CD8-positive, alpha-beta T cell (primary cell): ENCODE measurements at regions of chr15 and their contacts with region 1.

Region 1: DNA sequence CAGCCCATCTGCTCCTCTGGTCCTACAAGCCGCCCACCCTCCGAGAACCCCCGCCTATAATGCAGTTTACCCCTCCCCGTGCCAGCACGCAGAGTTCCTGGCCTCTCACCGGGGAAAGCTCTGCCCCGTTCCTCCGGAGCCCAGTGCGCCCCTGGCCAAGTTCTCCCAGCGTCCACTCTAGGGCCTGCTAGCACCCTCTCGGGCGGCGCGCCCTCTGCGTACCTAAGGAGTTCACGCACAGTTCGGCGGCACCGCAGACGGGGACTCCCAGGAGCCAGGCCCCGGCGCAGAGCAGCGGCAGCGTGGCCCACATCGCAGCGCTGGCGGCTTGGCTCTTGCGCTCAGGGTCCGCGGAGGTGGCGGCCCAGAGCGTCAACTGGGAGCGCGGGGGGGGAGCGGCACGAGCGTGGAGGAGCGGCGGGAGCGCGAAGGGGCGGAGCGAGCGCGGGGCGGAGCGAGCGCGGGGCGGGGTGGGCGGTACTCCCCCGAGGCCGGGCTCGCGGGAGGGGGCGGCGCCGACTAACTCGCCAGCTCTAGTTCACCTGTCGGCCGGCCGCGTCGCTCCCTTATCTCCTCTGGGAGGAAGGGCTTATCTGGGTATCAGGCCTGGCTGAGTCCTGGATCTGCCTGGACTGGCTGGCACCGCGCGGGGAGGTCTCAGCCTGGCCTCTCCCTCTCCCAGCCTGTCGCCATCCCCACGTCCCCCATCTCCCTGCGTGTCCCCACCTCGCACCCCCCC is at the start of gene CTSH:
- DNase-seq: peak; percentile 34 to 84 (median 72)
- ATAC-seq: peak; percentile 96
- H3K4me3 ChIP-seq: peak within 1 kb of the TSS; percentile 54 to 57
- H3K4me3 Mint-ChIP-seq: peak within 1 kb of the TSS; percentile 79
- H3K27ac ChIP-seq: no peak within 1 kb of the TSS
- H3K27ac Mint-ChIP-seq: peak within 1 kb of the TSS; percentile 64
- H3K4me1 ChIP-seq: peaks cover 6% of the 10 kb centered on the region
- H3K4me1 Mint-ChIP-seq: peaks cover 4% of the 10 kb centered on the region
- H3K27me3 ChIP-seq: peaks cover 0 to 2% of the 10 kb centered on the region in 2 experiments
- H3K27me3 Mint-ChIP-seq: peaks cover 3% of the 10 kb centered on the region
- CTCF ChIP-seq: no peak
- total RNA-seq, gene CTSH: 3.7 to 5.0 TPM

Region 2: GRCh38 chr15:78671626-78672211 is 273.1 kb before region 1 on chr15:
- CTCF ChIA-PET with region 1: no interaction called
- POLR2A ChIA-PET with region 1: no interaction called
- intact Hi-C with region 1: no loop called
- DNase-seq: no peak
- ATAC-seq: no peak
- H3K4me3 ChIP-seq: no peak overlapping the region
- H3K4me3 Mint-ChIP-seq: no peak overlapping the region
- H3K27ac ChIP-seq: no peak overlapping the region
- H3K27ac Mint-ChIP-seq: no peak overlapping the region
- H3K4me1 ChIP-seq: no peaks in the 10 kb centered on the region
- H3K4me1 Mint-ChIP-seq: no peaks in the 10 kb centered on the region
- H3K27me3 ChIP-seq: no peaks in the 10 kb centered on the region
- H3K27me3 Mint-ChIP-seq: no peaks in the 10 kb centered on the region
- CTCF ChIP-seq: no peak

Region 3: GRCh38 chr15:79243723-79244122 is 298.9 kb after region 1 on chr15:
- CTCF ChIA-PET with region 1: no interaction called
- POLR2A ChIA-PET with region 1: no interaction called
- intact Hi-C with region 1: no loop called
- DNase-seq: no peak
- ATAC-seq: no peak
- H3K4me3 ChIP-seq: no peak overlapping the region
- H3K4me3 Mint-ChIP-seq: no peak overlapping the region
- H3K27ac ChIP-seq: no peak overlapping the region
- H3K27ac Mint-ChIP-seq: no peak overlapping the region
- H3K4me1 ChIP-seq: no peaks in the 10 kb centered on the region
- H3K4me1 Mint-ChIP-seq: no peaks in the 10 kb centered on the region
- H3K27me3 ChIP-seq: no peaks in the 10 kb centered on the region
- H3K27me3 Mint-ChIP-seq: peaks cover 10% of the 10 kb centered on the region
- CTCF ChIP-seq: no peak

Region 4: GRCh38 chr15:80695104-80695910 is 1750.5 kb after region 1 on chr15 and contains the start of gene ABHD17C:
- CTCF ChIA-PET with region 1: no interaction called
- POLR2A ChIA-PET with region 1: no interaction called
- intact Hi-C with region 1: loop called in 1 of 2 experiments (anchors 10 kb)
- DNase-seq: peak in 8 of 9 experiments; percentile 14 to 70 (median 42)
- ATAC-seq: peak; percentile 69
- H3K4me3 ChIP-seq: peak within 1 kb of the TSS; percentile 58 to 63
- H3K4me3 Mint-ChIP-seq: peak within 1 kb of the TSS; percentile 95
- H3K27ac ChIP-seq: peak within 1 kb of the TSS; percentile 20 to 57
- H3K27ac Mint-ChIP-seq: peak within 1 kb of the TSS; percentile 86
- H3K4me1 ChIP-seq: peaks cover 11% of the 10 kb centered on the region
- H3K4me1 Mint-ChIP-seq: peaks cover 23% of the 10 kb centered on the region
- H3K27me3 ChIP-seq: no peaks in the 10 kb centered on the region
- H3K27me3 Mint-ChIP-seq: peaks cover 3% of the 10 kb centered on the region
- CTCF ChIP-seq: no peak
- total RNA-seq, gene ABHD17C: 0.75 to 1.1 TPM